Activated T-helper 1 cell treated with anti-CD3 and anti-CD28 coated beads, Interleukin-12 subunit alpha, Interleukin-12 subunit beta, Interleukin-2, Interleukin-4 antibody, amounts not matched to agents 30 ng/mL and 10 ng/mL and 1 ng/mL, durations not matched to agents 14 hours and 24 hours and 36 hours (primary cell): ENCODE measurements at regions of chrX and their contacts with region 1.

Region 1: DNA sequence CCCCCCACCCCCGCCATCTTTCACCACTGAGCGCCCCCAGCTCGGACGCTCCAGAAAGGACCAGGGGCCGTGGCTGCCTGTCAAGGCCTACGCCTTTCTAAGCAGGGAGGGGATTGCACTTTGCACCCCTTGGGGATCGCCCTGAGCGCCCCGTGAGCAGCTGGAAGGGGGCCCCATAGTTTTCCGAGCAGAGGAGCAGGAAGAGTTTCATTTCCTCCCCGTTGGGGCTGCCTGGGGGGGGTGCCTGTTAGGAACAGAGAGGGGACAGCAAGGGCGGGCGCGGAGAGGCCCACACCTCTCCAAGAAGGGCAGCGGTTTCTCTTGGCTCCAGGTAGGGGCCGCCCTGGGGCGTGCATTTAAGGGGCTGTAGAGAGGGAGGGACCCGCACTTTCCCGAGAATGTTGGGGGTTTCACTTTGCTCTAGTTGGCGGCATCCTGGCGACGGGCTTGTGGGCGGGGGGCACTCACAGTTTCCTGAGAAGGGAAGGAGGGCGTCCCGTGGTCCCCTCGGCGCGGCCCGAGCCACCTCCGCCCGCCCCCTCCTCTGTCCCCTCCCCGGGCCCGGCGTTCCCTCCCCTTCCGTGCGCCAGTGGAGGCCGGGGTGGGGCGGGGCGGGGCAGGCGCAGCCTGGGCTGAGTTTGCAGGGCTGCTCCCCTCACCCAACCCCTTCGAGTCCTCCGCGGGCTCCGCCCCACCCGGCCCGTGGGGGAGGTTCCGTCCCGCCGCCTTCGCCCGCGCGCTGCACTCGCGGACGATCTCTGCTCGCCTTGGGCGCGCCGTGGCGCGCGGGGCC is 82.3 kb upstream of the CD99 start:
- DNase-seq: peak; percentile 89
- H3K4me3 Mint-ChIP-seq: peak overlapping the region; percentile 91
- H3K27ac Mint-ChIP-seq: peak overlapping the region; percentile 89
- H3K4me1 Mint-ChIP-seq: peaks cover 47% of the 10 kb centered on the region
- H3K27me3 Mint-ChIP-seq: no peaks in the 10 kb centered on the region

Region 2: GRCh38 chrX:1591102-1591900 is 1017.5 kb before region 1 on chrX and contains the start of gene AKAP17A:
- intact Hi-C with region 1: loop called (anchors 5 kb)
- DNase-seq: peak; percentile 99
- H3K4me3 Mint-ChIP-seq: peak within 1 kb of the TSS; percentile 95
- H3K27ac Mint-ChIP-seq: peak within 1 kb of the TSS; percentile 93
- H3K4me1 Mint-ChIP-seq: peaks cover 10% of the 10 kb centered on the region
- H3K27me3 Mint-ChIP-seq: no peaks in the 10 kb centered on the region
- total RNA-seq, gene AKAP17A: 63.9 and 66.1 TPM in 2 replicates

Region 3: GRCh38 chrX:1657367-1658070 is 951.3 kb before region 1 on chrX:
- intact Hi-C with region 1: loop called (anchors 1 kb)
- DNase-seq: peak; percentile 51
- H3K4me3 Mint-ChIP-seq: peak overlapping the region; percentile 98
- H3K27ac Mint-ChIP-seq: peak overlapping the region; percentile 99
- H3K4me1 Mint-ChIP-seq: peaks cover 36% of the 10 kb centered on the region
- H3K27me3 Mint-ChIP-seq: no peaks in the 10 kb centered on the region

Region 4: DNA sequence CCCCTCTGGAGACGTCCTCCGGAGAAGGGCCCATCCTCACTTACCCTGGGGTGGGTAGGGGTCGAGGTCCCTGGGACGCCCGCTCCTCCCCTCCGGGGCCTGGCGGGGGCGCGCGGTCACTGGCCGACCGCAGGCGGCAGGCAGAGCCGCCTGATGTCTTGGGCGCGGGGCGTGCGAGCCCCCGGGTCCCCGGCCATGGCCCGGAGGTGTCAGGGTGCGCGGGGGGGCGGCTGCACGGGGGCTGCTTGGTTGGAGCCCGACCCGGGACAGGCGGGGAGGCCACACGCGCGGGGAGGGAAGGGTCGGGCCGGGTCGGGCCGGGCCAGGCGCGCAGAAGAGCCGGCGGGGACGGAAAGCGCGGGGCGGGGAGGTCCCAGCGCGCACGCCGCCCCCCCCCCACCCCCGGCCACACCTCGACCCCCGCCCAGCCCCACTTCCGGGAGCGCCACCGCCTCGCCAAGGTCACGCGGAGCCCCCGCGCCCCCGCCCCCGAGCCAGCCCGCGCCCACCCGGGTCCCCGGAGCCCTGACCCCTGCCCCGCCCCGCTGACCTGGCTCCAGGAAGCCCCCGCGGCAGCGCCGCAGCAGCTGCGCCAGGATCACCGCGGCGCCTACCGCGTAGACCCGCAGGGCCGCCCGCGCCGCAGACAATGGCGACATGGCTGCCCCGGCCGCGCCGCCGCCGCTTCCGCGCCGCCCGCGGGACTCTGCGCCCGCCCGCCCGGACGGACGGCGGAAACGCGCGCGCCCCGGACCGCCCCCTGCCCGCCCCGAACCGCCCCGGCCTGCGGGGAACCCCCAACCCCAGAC is 108.4 kb before region 1 on chrX and contains the starts of genes DHRSX and ZBED1:
- intact Hi-C with region 1: loop called (anchors 5 kb)
- DNase-seq: peak; percentile 53
- H3K4me3 Mint-ChIP-seq: peak within 1 kb of the TSS; percentile 88
- H3K27ac Mint-ChIP-seq: peak within 1 kb of the TSS; percentile 80
- H3K4me1 Mint-ChIP-seq: peaks cover 27% of the 10 kb centered on the region
- H3K27me3 Mint-ChIP-seq: peaks cover 2% of the 10 kb centered on the region
- total RNA-seq, gene DHRSX: 26.3 and 27.4 TPM in 2 replicates
- total RNA-seq, gene ZBED1: 39.8 and 41.6 TPM in 2 replicates

Region 5: DNA sequence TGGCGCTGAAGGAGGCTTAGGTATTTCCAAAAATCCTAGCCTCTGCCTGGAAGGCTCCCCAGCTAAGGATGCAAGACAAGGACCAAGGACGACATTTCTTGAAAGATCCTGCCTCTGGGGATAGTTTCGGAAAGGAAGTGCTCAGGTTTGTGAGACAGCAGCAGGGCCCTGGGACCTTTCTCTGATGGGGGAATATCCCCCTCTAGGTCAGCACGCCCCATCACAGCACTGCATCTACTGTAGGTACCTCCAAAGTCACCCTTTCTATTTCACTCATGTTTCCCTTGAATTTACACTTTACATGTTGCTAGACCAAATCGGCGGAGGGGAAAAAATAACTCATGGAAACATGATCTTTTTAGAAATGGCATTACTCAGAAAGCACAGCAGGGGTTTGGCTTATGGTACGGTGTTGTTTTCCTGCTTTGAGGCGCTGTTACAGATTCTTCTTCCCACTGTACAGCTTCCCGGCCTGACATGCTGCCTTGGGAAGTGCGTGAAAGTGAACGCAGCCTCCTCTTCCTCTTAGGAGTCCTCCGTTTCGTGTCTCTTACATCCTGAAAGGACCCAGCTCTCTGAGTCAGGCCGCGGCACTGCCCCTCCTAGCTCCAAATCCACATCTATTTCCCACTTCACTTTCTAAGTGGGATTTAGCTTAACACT is 30.9 kb before region 1 on chrX:
- intact Hi-C with region 1: no loop called
- DNase-seq: no peak
- H3K4me3 Mint-ChIP-seq: no peak overlapping the region
- H3K27ac Mint-ChIP-seq: no peak overlapping the region
- H3K4me1 Mint-ChIP-seq: peaks cover 5% of the 10 kb centered on the region
- H3K27me3 Mint-ChIP-seq: peaks cover 21% of the 10 kb centered on the region

Region 6: GRCh38 chrX:2690856-2691542 is 82.2 kb after region 1 on chrX and contains the start of gene CD99:
- intact Hi-C with region 1: loop called (anchors 1 kb)
- DNase-seq: peak; percentile 90
- H3K4me3 Mint-ChIP-seq: peak within 1 kb of the TSS; percentile 99
- H3K27ac Mint-ChIP-seq: peak within 1 kb of the TSS; percentile 99
- H3K4me1 Mint-ChIP-seq: peaks cover 31% of the 10 kb centered on the region
- H3K27me3 Mint-ChIP-seq: peaks cover 5% of the 10 kb centered on the region
- total RNA-seq, gene CD99: 421 and 437 TPM in 2 replicates

Region 7: DNA sequence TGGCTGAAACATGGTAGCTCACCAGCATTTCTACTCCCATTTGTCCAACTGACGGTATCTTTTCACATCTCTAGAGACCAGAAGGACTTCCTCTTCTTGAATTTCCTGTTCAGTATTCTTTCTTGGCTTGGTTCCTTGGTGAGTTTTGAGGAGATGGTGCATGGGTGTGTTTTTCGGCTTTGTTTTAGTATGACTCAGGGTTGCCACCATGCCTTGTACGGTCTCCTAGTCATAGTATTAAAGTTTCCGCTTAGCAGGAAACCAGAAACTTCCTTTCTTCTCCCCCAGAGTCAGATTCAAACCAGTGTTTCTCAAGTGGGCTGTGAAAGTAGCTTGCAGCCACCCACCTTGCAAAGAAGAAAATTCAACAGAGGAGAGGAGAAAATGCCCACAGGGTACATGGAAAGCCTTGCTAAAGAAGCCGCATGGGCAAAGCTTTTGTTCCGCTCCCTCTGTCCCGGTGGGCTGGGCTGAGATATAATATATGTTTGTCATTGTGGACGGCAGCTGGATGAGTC is 87.9 kb after region 1 on chrX:
- intact Hi-C with region 1: loop called (anchors 1 kb)
- DNase-seq: peak; percentile 63
- H3K4me3 Mint-ChIP-seq: peak overlapping the region; percentile 99
- H3K27ac Mint-ChIP-seq: peak overlapping the region; percentile 99
- H3K4me1 Mint-ChIP-seq: peaks cover 86% of the 10 kb centered on the region
- H3K27me3 Mint-ChIP-seq: no peaks in the 10 kb centered on the region

Region 8: DNA sequence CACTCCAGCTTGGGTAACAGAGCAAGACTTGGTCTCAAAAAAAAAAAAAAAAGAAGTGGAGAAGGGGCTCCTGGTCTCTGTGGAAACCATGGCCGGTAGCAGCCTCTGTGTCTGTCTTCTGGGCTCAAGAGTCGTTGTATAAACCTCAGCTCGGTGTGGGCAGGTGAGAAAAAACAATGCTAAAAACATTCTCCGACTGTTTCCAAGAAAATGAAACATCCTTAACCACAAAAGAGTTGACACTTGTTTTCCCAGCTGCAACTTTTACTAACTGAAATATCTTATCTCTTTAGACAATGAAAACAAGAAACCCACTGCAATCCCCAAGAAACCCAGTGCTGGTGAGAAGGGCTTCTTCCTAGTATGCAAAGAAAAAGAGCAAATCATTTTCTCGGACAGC is 108.5 kb after region 1 on chrX:
- intact Hi-C with region 1: loop called (anchors 2 kb)
- DNase-seq: no peak
- H3K4me3 Mint-ChIP-seq: peak overlapping the region; percentile 53
- H3K27ac Mint-ChIP-seq: peak overlapping the region; percentile 93
- H3K4me1 Mint-ChIP-seq: peaks cover 38% of the 10 kb centered on the region
- H3K27me3 Mint-ChIP-seq: no peaks in the 10 kb centered on the region